ENCODE measurements at regions of chr5 and their contacts with region 1.

Region 1: DNA sequence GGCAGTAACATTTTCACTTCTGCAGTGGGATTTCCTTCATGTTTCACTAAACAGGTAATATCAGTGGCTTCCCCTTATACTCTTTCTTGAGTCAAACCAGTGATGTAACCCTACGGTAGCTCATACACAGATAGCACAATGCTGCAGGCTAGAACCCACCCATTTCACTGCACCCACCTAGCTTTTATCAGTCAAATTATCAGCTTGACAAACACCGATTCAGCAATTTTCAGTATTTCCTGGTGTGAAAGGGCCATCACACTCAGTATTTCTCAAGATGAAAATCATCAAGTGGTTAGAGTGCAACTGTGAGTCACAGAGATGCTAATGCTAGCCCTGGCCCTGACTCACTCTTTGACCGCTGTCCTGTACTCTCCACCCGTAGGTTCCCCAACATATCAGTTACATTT is 242.3 kb upstream of the PTGER4 start:
- DNase-seq: peak in 5 of 14 experiments; percentile 5 to 74 (median 58)
- ATAC-seq: no peak
- H3K4me3 ChIP-seq: no peak overlapping the region
- H3K4me3 Mint-ChIP-seq: no peak overlapping the region
- H3K27ac ChIP-seq: peak overlapping the region; percentile 32 to 48
- H3K27ac Mint-ChIP-seq: peak overlapping the region; percentile 79
- H3K4me1 ChIP-seq: peaks cover 41% of the 10 kb centered on the region
- H3K4me1 Mint-ChIP-seq: peaks cover 68% of the 10 kb centered on the region
- H3K27me3 ChIP-seq: no peaks in the 10 kb centered on the region
- H3K27me3 Mint-ChIP-seq: no peaks in the 10 kb centered on the region
- CTCF ChIP-seq: no peak

Region 2: GRCh38 chr5:39948867-39949468 is 488.5 kb before region 1 on chr5:
- CTCF ChIA-PET with region 1: no interaction called
- POLR2A ChIA-PET with region 1: no interaction called
- intact Hi-C with region 1: loop called in 1 of 2 experiments (anchors 5 kb)
- DNase-seq: peak; percentile 7 to 85 (median 50)
- ATAC-seq: peak; percentile 77
- H3K4me3 ChIP-seq: no peak overlapping the region
- H3K4me3 Mint-ChIP-seq: no peak overlapping the region
- H3K27ac ChIP-seq: no peak overlapping the region
- H3K27ac Mint-ChIP-seq: no peak overlapping the region
- H3K4me1 ChIP-seq: no peaks in the 10 kb centered on the region
- H3K4me1 Mint-ChIP-seq: peaks cover 5% of the 10 kb centered on the region
- H3K27me3 ChIP-seq: no peaks in the 10 kb centered on the region
- H3K27me3 Mint-ChIP-seq: no peaks in the 10 kb centered on the region
- CTCF ChIP-seq: peak; percentile 72

Region 3: DNA sequence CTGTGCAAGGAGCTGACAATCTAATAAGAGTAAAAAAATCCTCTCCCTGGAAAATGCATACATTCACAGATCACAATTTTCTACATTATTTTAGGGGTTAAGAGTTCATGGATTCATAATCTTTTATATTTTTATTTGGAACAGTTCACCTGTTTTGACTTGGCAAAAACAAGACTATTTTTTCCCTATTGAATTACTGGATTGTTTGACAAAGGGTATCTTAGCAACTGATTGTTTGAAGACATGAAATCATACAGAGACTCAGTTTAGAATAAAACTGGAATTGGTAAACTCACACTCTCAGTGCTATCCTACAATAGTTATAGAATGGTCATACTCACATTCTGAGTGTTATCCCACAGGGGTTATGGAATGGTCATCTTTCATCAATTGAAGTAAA is 115.9 kb before region 1 on chr5:
- CTCF ChIA-PET with region 1: no interaction called
- POLR2A ChIA-PET with region 1: no interaction called
- intact Hi-C with region 1: no loop called
- DNase-seq: no peak
- ATAC-seq: no peak
- H3K4me3 ChIP-seq: no peak overlapping the region
- H3K4me3 Mint-ChIP-seq: no peak overlapping the region
- H3K27ac ChIP-seq: no peak overlapping the region
- H3K27ac Mint-ChIP-seq: no peak overlapping the region
- H3K4me1 ChIP-seq: no peaks in the 10 kb centered on the region
- H3K4me1 Mint-ChIP-seq: peaks cover 10% of the 10 kb centered on the region
- H3K27me3 ChIP-seq: no peaks in the 10 kb centered on the region
- H3K27me3 Mint-ChIP-seq: no peaks in the 10 kb centered on the region
- CTCF ChIP-seq: no peak

Region 4: GRCh38 chr5:40367255-40367654 is 70.2 kb before region 1 on chr5:
- CTCF ChIA-PET with region 1: interaction called, 4 read pairs
- POLR2A ChIA-PET with region 1: no interaction called
- intact Hi-C with region 1: loop called (anchors 5 kb)
- DNase-seq: peak in 5 of 14 experiments; percentile 19 to 74 (median 43)
- ATAC-seq: peak; percentile 66
- H3K4me3 ChIP-seq: no peak overlapping the region
- H3K4me3 Mint-ChIP-seq: no peak overlapping the region
- H3K27ac ChIP-seq: no peak overlapping the region
- H3K27ac Mint-ChIP-seq: peak overlapping the region; percentile 17
- H3K4me1 ChIP-seq: no peaks in the 10 kb centered on the region
- H3K4me1 Mint-ChIP-seq: peaks cover 7% of the 10 kb centered on the region
- H3K27me3 ChIP-seq: no peaks in the 10 kb centered on the region
- H3K27me3 Mint-ChIP-seq: no peaks in the 10 kb centered on the region
- CTCF ChIP-seq: no peak

Region 5: DNA sequence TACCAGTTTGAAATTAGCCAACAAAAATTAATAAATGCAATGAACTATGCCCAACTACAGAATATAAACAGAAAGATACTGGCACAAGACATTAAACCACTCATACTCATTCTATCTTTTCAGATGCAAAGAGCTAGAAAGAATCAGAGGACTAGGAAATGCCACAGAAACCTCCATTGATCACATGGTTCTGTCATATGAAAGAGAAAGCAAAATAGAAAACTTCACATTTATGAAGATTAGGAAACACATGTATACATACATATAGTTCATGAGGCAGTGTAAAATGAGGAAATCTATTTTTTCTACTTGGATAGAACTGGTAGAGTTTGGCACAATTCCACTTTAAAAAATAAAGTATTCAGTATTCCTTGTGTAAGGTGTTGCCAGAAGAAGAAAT is 32.8 kb before region 1 on chr5:
- CTCF ChIA-PET with region 1: interaction called, 13 read pairs
- POLR2A ChIA-PET with region 1: interaction called, 43 read pairs
- intact Hi-C with region 1: no loop called
- DNase-seq: peak in 3 of 14 experiments; percentile 69 to 77 (median 71)
- ATAC-seq: peak; percentile 58
- H3K4me3 ChIP-seq: no peak overlapping the region
- H3K4me3 Mint-ChIP-seq: peak overlapping the region; percentile 49
- H3K27ac ChIP-seq: peak overlapping the region; percentile 74 to 91
- H3K27ac Mint-ChIP-seq: peak overlapping the region; percentile 87
- H3K4me1 ChIP-seq: peaks cover 51% of the 10 kb centered on the region
- H3K4me1 Mint-ChIP-seq: peaks cover 68% of the 10 kb centered on the region
- H3K27me3 ChIP-seq: no peaks in the 10 kb centered on the region
- H3K27me3 Mint-ChIP-seq: no peaks in the 10 kb centered on the region
- CTCF ChIP-seq: no peak

Region 6: DNA sequence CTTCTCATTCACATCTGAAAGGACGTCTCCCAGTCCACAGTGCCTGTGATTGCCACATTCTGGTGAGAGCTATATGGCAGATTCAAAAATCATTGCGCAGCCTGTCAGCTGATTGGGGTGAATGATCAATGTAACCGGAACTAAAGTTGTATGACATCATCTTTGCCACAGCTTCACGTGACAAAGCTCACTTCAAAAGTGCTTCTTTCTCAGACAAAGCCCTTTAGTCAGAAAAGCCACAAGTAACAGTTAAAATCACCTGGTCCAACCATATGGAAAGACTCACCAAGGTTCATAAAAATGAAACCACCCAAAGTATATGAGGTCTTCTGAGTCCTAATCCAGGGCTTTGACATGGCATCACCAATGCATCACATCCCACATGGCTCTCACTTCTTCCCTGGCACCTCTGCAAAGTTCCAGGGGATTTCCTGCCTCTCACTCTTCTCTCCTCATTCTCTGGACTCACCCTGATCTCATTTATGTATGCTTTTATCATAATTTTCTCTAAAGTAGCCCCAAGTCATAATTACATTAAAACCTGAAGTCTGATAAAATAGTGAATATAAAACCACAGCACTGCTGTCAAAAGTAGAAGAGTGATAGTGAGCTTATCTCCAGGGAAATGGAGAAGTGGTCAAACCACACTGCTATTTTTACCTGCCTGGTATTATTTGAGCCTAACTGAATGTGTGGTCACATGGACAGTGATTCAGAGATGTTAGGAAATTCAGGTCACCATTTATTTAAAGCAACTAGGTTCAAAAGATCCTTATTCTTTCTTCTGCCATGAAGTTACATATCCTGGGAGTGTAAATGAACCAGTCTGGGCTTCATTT is 49.2 kb after region 1 on chr5:
- CTCF ChIA-PET with region 1: no interaction called
- POLR2A ChIA-PET with region 1: no interaction called
- intact Hi-C with region 1: loop called in 1 of 2 experiments (anchors 5 kb)
- DNase-seq: peak in 11 of 14 experiments; percentile 1 to 88 (median 19)
- ATAC-seq: peak; percentile 85
- H3K4me3 ChIP-seq: no peak overlapping the region
- H3K4me3 Mint-ChIP-seq: peak overlapping the region; percentile 26
- H3K27ac ChIP-seq: peak overlapping the region in 1 of 2 donors; percentile 8
- H3K27ac Mint-ChIP-seq: peak overlapping the region; percentile 64
- H3K4me1 ChIP-seq: peaks cover 5% of the 10 kb centered on the region
- H3K4me1 Mint-ChIP-seq: peaks cover 42% of the 10 kb centered on the region
- H3K27me3 ChIP-seq: no peaks in the 10 kb centered on the region
- H3K27me3 Mint-ChIP-seq: no peaks in the 10 kb centered on the region
- CTCF ChIP-seq: no peak

Region 7: GRCh38 chr5:40679155-40679913 is 241.9 kb after region 1 on chr5:
- CTCF ChIA-PET with region 1: no interaction called
- POLR2A ChIA-PET with region 1: interaction called, 15 read pairs
- intact Hi-C with region 1: no loop called
- DNase-seq: peak; percentile 79 to 95 (median 88)
- ATAC-seq: peak; percentile 67
- H3K4me3 ChIP-seq: peak overlapping the region; percentile 91
- H3K4me3 Mint-ChIP-seq: peak overlapping the region; percentile 99
- H3K27ac ChIP-seq: peak overlapping the region; percentile 82 to 93
- H3K27ac Mint-ChIP-seq: peak overlapping the region; percentile 84
- H3K4me1 ChIP-seq: peaks cover 38% of the 10 kb centered on the region
- H3K4me1 Mint-ChIP-seq: peaks cover 59% of the 10 kb centered on the region
- H3K27me3 ChIP-seq: no peaks in the 10 kb centered on the region
- H3K27me3 Mint-ChIP-seq: no peaks in the 10 kb centered on the region
- CTCF ChIP-seq: no peak